ENCODE measurements at regions of chr6 and their contacts with region 1.

Region 1: DNA sequence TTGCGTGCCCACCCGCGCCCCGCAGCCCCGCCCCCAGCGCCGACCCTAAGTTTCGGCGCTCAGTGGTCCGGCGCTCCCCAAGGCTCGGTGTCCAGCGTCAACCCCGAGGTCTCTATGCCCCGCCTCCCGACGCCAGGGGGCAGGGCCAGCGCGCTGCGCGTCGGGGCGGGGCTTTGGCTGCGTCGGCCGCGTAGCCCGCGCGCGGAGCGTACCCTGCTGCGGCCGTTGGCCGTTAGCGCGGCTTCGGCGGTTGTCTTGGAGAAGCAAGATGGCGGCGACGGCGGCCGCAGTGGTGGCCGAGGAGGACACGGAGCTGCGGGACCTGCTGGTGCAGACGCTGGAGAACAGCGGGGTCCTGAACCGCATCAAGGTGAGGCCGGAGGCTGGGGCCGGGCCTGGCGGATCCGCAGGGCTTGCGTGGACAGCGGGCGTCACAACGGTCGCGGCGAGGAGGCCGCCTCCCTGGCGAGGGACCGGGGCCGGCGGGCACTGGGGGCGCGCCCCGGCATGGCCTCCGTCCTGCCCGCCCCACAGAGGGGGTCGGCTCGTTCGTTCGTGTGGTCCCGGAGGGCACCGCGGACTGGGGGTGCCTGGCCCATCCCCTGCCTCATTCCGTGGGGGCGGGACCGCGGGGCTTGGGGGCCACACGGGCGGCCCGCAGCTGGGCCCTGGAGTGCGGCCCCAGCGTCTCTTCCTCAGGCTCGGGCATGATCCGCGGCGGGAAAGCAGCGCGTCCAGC is at the start of gene CEP43:
- DNase-seq: peak; percentile 97
- ATAC-seq: peak; percentile 98 to 99
- total RNA-seq, gene CEP43: 8.9 to 10.2 TPM

Region 2: GRCh38 chr6:167141667-167142432 is 142.5 kb after region 1 on chr6:
- intact Hi-C with region 1: loop called in 1 of 2 experiments (anchors 10 kb)
- DNase-seq: peak; percentile 42
- ATAC-seq: peak; percentile 83 to 88